ENCODE measurements at regions of chr4 and their contacts with region 1.

Region 1: DNA sequence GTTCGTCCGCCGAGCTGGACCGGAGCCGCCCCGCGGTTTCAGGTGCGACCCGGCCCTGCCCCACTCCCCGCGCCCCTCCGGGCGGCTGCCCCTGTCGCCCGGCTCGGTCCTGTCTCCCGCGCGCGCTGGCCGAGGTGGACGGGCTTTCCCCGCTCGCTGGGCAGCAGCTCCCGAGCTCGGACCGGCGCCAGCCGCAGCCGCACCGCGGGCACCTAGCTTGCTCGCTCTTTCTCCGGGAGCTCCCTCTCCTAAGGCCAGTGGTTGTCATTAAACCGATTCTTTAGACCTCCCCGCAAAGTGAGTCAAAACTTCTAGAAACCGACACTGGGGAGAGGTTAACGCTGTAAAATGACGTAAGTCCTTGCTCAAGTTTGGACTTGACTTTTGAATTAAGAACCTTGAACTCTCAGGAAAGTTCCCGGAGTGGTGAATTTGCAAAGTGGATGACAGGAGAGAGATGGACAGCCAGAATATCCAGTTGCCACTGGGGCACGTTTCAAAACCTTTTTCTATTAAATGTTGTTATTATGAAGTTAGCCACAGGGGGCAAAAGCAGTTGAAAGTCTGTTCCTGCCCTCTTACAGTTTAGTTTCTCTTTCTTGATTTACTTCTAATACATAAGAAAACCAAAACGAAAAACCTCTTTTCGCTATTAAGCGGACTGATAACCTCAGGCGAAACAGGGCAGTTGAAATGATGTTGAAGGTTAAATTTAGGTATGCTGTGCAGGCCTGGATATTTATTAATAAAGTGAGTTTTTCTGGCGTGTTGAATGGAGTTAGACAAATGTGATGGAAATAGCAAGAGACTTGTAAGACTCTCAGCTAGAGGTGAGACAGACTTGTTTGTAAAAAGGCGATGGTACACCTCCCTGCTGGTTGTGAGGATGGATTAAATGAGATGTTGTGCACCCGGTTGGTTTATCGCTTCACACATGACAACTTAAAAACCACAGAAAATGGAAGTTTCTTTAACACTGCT is 847 bp downstream of the PI4K2B start:
- DNase-seq: peak; percentile 52 to 68
- H3K4me3 ChIP-seq: peak overlapping the region; percentile 94
- H3K4me3 Mint-ChIP-seq: peak overlapping the region; percentile 94
- H3K27ac Mint-ChIP-seq: peak overlapping the region; percentile 88
- H3K4me1 ChIP-seq: no peaks in the 10 kb centered on the region
- H3K4me1 Mint-ChIP-seq: no peaks in the 10 kb centered on the region
- H3K27me3 ChIP-seq: no peaks in the 10 kb centered on the region
- H3K27me3 Mint-ChIP-seq: no peaks in the 10 kb centered on the region
- CTCF ChIP-seq: peak; percentile 30 to 45

Region 2: DNA sequence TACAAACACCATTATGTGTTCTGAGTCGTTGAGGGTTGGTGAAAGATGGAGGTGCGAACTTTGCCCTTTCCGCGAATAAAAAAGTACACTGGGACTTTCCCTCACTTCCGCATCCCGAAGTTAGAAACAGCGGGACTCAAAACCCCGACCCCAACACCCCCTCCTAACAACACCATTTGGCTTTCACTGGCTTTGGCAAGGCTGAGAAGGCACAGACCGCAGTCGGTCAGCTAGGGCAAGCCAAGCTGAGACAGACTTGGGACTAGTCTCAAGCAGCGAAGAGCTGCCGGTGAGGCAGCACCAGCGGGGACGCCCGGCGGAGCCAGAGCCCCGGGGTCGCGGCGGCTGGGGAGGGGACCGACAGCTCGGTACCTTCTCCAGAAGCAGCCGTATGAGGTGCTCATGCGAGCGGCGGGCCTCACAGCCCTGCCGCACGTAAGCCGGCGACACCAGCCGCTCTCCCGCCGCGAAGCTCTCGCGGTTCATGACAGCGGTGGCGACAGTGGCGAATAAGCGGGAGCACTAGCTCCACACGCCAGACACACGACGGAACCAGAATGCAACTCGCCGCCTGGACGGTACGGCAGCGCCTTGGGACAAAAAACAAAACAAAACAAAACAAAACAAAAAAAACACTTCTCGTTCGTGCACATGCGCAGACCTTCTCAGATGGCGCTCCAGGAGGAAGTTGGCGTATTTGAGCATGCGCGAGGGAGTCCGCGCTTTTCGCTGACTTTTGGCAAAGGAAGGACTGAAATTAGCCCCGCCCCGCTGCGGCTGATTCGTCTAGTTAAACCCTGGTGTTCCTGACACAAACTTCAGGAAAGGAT is 74.6 kb before region 1 on chr4 and contains the start of gene SEPSECS:
- CTCF ChIA-PET with region 1: interaction called, 3 read pairs
- POLR2A ChIA-PET with region 1: interaction called, 12 read pairs
- intact Hi-C with region 1: loop called (anchors 2 kb)
- DNase-seq: peak; percentile 94 to 95
- H3K4me3 ChIP-seq: peak within 1 kb of the TSS; percentile 70
- H3K4me3 Mint-ChIP-seq: peak within 1 kb of the TSS; percentile 92
- H3K27ac Mint-ChIP-seq: peak within 1 kb of the TSS; percentile 92
- H3K4me1 ChIP-seq: peaks cover 14% of the 10 kb centered on the region; the same call in 1 of the 2 replicates
- H3K4me1 Mint-ChIP-seq: peaks cover 16% of the 10 kb centered on the region
- H3K27me3 ChIP-seq: no peaks in the 10 kb centered on the region
- H3K27me3 Mint-ChIP-seq: no peaks in the 10 kb centered on the region
- CTCF ChIP-seq: no peak
- total RNA-seq, gene SEPSECS: 5.7 and 6.0 TPM in 2 replicates

Region 3: GRCh38 chr4:25180524-25181131 is 54.1 kb before region 1 on chr4:
- CTCF ChIA-PET with region 1: interaction called, 3 read pairs
- POLR2A ChIA-PET with region 1: no interaction called
- intact Hi-C with region 1: loop called (anchors 2 kb)
- DNase-seq: peak; percentile 37 to 39
- H3K4me3 ChIP-seq: no peak overlapping the region
- H3K4me3 Mint-ChIP-seq: no peak overlapping the region
- H3K27ac Mint-ChIP-seq: no peak overlapping the region
- H3K4me1 ChIP-seq: peaks cover 11% of the 10 kb centered on the region; the same call in 1 of the 2 replicates
- H3K4me1 Mint-ChIP-seq: no peaks in the 10 kb centered on the region
- H3K27me3 ChIP-seq: no peaks in the 10 kb centered on the region
- H3K27me3 Mint-ChIP-seq: no peaks in the 10 kb centered on the region
- CTCF ChIP-seq: peak; percentile 56 to 61

Region 4: GRCh38 chr4:25306518-25307057 is 71.9 kb after region 1 on chr4:
- CTCF ChIA-PET with region 1: no interaction called
- POLR2A ChIA-PET with region 1: no interaction called
- intact Hi-C with region 1: no loop called
- DNase-seq: no peak
- H3K4me3 ChIP-seq: no peak overlapping the region
- H3K4me3 Mint-ChIP-seq: no peak overlapping the region
- H3K27ac Mint-ChIP-seq: no peak overlapping the region
- H3K4me1 ChIP-seq: peaks cover 10% of the 10 kb centered on the region
- H3K4me1 Mint-ChIP-seq: peaks cover 7% of the 10 kb centered on the region
- H3K27me3 ChIP-seq: no peaks in the 10 kb centered on the region
- H3K27me3 Mint-ChIP-seq: no peaks in the 10 kb centered on the region
- CTCF ChIP-seq: no peak

Region 5: DNA sequence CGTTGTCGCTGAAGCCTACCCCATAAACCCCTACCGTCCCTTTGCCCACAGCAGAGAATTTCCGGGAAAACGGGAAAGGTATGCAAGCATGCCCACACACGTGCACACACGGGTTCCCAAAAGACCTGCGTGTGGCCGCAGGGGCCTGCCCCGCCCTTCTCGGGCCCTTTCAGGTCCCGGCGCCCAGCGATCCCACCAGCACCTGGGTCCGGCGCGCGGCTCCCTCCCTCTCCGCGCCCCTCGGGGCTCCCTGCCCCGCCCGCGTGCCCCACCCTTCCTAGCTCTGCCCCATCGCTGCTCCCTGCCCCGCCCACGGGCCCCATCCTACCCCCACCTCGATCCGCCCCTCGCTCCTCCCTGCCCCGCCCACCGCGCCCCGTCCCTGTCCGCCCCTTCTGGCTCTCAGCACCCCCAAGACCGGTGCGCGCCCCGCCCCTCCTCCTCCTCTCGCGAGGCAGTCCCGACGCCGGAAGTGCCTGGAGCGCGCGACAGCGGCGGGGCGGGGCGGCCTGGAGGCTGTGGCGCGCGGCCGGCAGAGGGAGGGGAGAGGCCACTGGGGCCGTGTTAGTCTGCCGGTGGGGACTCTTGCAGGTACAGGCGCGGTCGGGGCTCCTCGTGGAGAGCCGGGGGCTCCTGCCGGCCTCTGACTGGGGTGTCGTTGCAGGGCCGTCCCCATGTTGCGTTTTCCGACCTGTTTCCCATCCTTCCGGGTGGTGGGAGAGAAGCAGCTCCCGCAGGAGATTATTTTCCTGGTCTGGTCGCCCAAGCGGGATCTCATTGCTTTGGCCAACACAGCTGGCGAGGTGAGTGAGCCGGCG is 142.3 kb after region 1 on chr4 and contains the start of gene ANAPC4:
- CTCF ChIA-PET with region 1: interaction called, 3 read pairs
- POLR2A ChIA-PET with region 1: no interaction called
- intact Hi-C with region 1: loop called (anchors 5 kb)
- DNase-seq: peak; percentile 95 to 97
- H3K4me3 ChIP-seq: peak within 1 kb of the TSS; percentile 84
- H3K4me3 Mint-ChIP-seq: no peak within 1 kb of the TSS
- H3K27ac Mint-ChIP-seq: peak within 1 kb of the TSS; percentile 87
- H3K4me1 ChIP-seq: peaks cover 10% of the 10 kb centered on the region; the same call in 1 of the 2 replicates
- H3K4me1 Mint-ChIP-seq: peaks cover 7% of the 10 kb centered on the region
- H3K27me3 ChIP-seq: no peaks in the 10 kb centered on the region
- H3K27me3 Mint-ChIP-seq: no peaks in the 10 kb centered on the region
- CTCF ChIP-seq: no peak
- total RNA-seq, gene ANAPC4: 24.9 and 32.3 TPM in 2 replicates

Measured in Caco-2 (cell line).